A673 (cell line): ENCODE measurements at regions of chr6 and their contacts with region 1.

Region 1: DNA sequence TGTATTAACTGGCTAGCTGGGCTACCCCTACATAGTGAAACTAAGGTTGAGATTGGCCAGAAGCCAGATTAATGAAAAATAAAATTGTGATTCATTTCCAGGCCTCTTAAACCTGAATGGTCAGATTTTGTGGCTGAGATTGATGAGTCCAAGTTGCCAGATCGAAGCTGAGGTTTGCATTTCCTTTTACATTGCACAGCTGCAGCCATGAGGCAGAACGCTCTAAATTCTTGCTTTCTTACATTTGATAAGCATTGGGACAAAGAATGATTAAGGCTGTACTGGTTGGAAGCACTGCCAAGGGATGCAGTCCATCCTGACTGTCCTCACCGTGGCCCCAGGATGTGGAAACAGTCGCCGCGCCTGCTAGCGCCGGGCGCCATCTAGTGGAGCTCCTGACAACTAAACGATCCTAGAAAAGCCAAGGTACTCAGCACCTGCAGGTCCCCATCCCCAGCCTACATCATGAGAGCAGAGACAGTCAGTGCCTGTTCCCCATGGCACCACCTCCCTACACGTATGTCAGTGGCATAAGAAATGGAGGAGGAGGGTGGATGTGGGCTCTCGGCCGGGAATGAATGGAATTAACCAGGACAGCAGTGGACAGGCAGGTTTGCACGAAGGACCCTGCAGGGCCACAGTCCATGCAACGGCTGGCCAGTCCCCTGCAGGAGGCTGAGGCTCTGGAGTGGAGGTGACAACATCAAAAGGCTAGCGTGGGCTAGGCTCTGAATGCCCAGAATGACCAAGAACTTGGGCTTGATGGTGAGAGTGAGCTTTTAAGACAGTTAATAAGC is 19.0 kb downstream of the PXDC1 start:
- DNase-seq: peak; percentile 76
- H3K4me3 ChIP-seq: no peak overlapping the region
- H3K27ac ChIP-seq: no peak overlapping the region
- H3K4me1 ChIP-seq: no peaks in the 10 kb centered on the region
- H3K27me3 ChIP-seq: no peaks in the 10 kb centered on the region
- CTCF ChIP-seq: peak; percentile 91

Region 2: DNA sequence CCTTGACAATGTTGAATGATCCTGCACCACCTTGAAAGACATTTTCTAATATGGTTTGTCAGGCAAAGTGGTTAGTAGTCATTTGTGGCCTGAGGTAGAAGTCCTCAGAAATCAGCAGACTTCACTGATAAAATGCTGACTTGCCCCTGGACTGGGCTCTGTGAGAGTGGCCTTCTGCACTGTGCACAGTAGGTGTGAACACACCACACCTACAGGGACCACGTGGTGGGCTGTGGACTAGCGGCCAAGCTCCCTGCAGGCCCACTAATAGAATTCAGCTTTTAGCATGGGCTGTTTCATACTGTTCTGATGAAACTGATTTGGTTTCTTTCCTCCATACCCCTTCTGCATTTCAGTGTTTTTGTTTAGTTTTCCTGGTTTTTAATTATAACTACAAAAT is 606.7 kb before region 1 on chr6:
- CTCF ChIA-PET with region 1: no interaction called
- POLR2A ChIA-PET with region 1: no interaction called
- intact Hi-C with region 1: loop called (anchors 10 kb)
- DNase-seq: no peak
- H3K4me3 ChIP-seq: no peak overlapping the region
- H3K27ac ChIP-seq: no peak overlapping the region
- H3K4me1 ChIP-seq: no peaks in the 10 kb centered on the region
- H3K27me3 ChIP-seq: no peaks in the 10 kb centered on the region
- CTCF ChIP-seq: no peak

Region 3: GRCh38 chr6:3410385-3411360 is 321.9 kb before region 1 on chr6:
- CTCF ChIA-PET with region 1: interaction called, 8 read pairs
- POLR2A ChIA-PET with region 1: no interaction called
- intact Hi-C with region 1: loop called (anchors 1 kb)
- DNase-seq: peak; percentile 84
- H3K4me3 ChIP-seq: no peak overlapping the region
- H3K27ac ChIP-seq: no peak overlapping the region
- H3K4me1 ChIP-seq: no peaks in the 10 kb centered on the region
- H3K27me3 ChIP-seq: no peaks in the 10 kb centered on the region
- CTCF ChIP-seq: peak; percentile 94

Region 4: GRCh38 chr6:3456755-3457466 is 275.6 kb before region 1 on chr6 and contains the start of gene SLC22A23:
- CTCF ChIA-PET with region 1: no interaction called
- POLR2A ChIA-PET with region 1: no interaction called
- intact Hi-C with region 1: loop called (anchors 5 kb)
- DNase-seq: peak; percentile 66
- H3K4me3 ChIP-seq: peak within 1 kb of the TSS; percentile 67
- H3K27ac ChIP-seq: no peak within 1 kb of the TSS
- H3K4me1 ChIP-seq: peaks cover 7% of the 10 kb centered on the region
- H3K27me3 ChIP-seq: no peaks in the 10 kb centered on the region
- CTCF ChIP-seq: peak; percentile 50
- total RNA-seq, gene SLC22A23: 6.2 TPM in 2 replicates

Region 5: DNA sequence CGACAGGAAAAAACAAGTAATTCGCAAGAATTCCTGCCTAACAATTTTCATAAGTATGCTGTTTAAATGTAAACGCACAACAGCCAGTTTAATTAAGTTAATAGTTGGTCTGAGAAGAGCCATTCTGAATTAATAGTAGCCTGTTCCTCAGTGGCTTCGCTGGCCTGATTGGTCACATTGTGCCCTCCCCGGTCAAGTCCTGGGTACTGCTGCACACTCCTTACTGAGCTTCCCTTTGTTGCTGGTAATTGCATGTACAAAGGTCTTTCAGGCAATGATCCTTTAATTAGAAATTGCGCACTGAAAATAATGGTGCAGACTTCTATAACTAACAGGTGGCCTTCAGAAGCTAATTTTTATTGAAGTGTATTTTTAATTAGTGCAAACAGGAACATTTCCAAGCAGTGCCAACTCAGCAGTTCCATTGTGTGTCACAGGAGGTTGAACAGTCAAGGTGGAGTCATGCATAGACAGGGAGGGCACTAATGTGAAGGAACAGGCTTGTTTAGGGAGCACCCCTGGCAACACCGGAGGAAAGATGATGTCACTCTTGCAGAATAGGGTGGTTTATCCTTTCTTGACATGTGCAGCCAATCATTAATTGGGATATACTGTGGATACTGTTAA is 183.1 kb before region 1 on chr6:
- CTCF ChIA-PET with region 1: no interaction called
- POLR2A ChIA-PET with region 1: no interaction called
- intact Hi-C with region 1: no loop called
- DNase-seq: no peak
- H3K4me3 ChIP-seq: no peak overlapping the region
- H3K27ac ChIP-seq: no peak overlapping the region
- H3K4me1 ChIP-seq: no peaks in the 10 kb centered on the region
- H3K27me3 ChIP-seq: no peaks in the 10 kb centered on the region
- CTCF ChIP-seq: no peak

Region 6: GRCh38 chr6:3905945-3906845 is 173.7 kb after region 1 on chr6:
- CTCF ChIA-PET with region 1: no interaction called
- POLR2A ChIA-PET with region 1: no interaction called
- intact Hi-C with region 1: no loop called
- DNase-seq: no peak
- H3K4me3 ChIP-seq: no peak overlapping the region
- H3K27ac ChIP-seq: no peak overlapping the region
- H3K4me1 ChIP-seq: no peaks in the 10 kb centered on the region
- H3K27me3 ChIP-seq: no peaks in the 10 kb centered on the region
- CTCF ChIP-seq: no peak